ENCODE measurements at regions of chr7 and their contacts with region 1.

Region 1: GRCh38 chr7:132633954-132634353 is 57.7 kb upstream of the PLXNA4 start:
- DNase-seq: no peak
- ATAC-seq: no peak
- H3K4me3 ChIP-seq: no peak overlapping the region
- H3K27ac ChIP-seq: no peak overlapping the region
- H3K4me1 ChIP-seq: no peaks in the 10 kb centered on the region
- H3K27me3 ChIP-seq: no peaks in the 10 kb centered on the region
- CTCF ChIP-seq: no peak

Region 2: DNA sequence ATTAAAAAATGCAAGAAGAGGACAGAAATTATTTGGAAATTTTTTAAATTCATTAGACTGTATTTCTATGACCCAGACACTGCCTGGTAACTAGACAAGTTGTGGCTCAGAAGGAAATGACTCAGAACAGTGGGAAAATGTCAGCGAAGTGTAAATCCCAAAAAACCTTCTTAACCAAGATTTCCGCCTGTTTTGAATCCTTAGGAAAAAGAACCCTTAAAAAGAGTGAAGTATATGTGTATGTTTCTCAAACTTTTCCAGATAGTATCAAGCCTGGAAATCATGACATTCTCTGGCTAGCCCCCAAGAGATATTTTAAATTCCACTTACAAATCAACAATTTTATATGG is 15.0 kb before region 1 on chr7:
- intact Hi-C with region 1: loop called in 1 of 10 experiments (anchors 1 kb)
- DNase-seq: no peak
- ATAC-seq: no peak
- H3K4me3 ChIP-seq: no peak overlapping the region
- H3K27ac ChIP-seq: no peak overlapping the region
- H3K4me1 ChIP-seq: peaks cover 0 to 7% (median 0%) of the 10 kb centered on the region in 9 donors
- H3K27me3 ChIP-seq: peaks cover 0 to 5% (median 0%) of the 10 kb centered on the region in 7 donors
- CTCF ChIP-seq: no peak